GM12878 (cell line): ENCODE measurements at regions of chr12 and their contacts with region 1.

Region 1: GRCh38 chr12:9813821-9814809 is 13.2 kb upstream of the KLRF1 start:
- DNase-seq: peak; percentile 23
- ATAC-seq: peak; percentile 100
- H3K4me3 ChIP-seq: peak overlapping the region; percentile 58; the same call in 1 of the 2 replicates
- H3K27ac ChIP-seq: no peak overlapping the region
- H3K4me1 ChIP-seq: no peaks in the 10 kb centered on the region
- H3K27me3 ChIP-seq: no peaks in the 10 kb centered on the region; a peak in 2 of 4 replicates
- CTCF ChIP-seq: peak; percentile 93 to 97 (median 93)
- EP300 ChIP-seq: no peak
- POLR2A ChIP-seq: no peak
- RAD21 ChIP-seq: peak; percentile 92

Region 2: DNA sequence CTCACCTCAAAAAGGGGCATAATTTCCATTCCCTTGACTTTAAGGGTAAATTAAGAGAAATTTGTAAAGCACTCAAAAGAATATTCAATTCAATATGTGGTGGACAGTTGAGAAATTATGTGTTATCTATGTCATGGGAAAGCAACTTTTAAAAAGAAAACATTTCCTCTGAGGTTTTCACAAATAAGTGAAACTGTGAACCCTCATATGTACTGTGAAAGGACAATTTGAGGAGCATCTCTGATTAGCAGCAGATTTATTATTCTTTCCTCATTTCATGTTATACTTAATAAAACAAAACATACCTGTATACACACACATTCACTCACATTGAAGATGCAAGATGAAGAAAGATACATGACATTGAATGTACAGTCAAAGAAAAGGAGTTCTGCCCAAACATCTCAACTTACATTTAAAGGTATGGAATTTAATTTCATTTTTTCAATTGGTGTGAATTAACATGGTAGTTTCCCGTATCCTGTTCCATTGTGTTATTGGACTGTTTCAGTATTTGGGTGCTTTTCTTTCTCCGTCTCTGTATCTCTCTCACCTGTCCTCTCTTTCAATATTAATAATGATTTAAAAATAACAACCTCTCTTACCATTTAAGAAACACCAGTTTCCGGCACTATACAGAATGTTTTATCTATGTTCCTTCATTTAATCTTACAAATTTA is 13.2 kb after region 1 on chr12 and contains the start of gene KLRF1:
- CTCF ChIA-PET with region 1: interaction called, 14 read pairs
- POLR2A ChIA-PET with region 1: no interaction called
- RAD21 ChIA-PET with region 1: no interaction called
- SMC1A ChIA-PET with region 1: interaction called, 3 read pairs
- in situ Hi-C with region 1: no loop called
- intact Hi-C with region 1: no loop called
- DNase-seq: no peak
- ATAC-seq: peak; percentile 36; the same call in 1 of the 3 replicates
- H3K4me3 ChIP-seq: no peak within 1 kb of the TSS
- H3K27ac ChIP-seq: no peak within 1 kb of the TSS
- H3K4me1 ChIP-seq: no peaks in the 10 kb centered on the region
- H3K27me3 ChIP-seq: no peaks in the 10 kb centered on the region
- CTCF ChIP-seq: no peak
- EP300 ChIP-seq: no peak
- POLR2A ChIP-seq: no peak
- RAD21 ChIP-seq: no peak
- polyA plus RNA-seq, gene KLRF1: 0.18 TPM in 1 of 2 experiments, not detected in the other

Region 3: GRCh38 chr12:9851927-9852326 is 37.8 kb after region 1 on chr12:
- CTCF ChIA-PET with region 1: interaction called, 11 read pairs
- POLR2A ChIA-PET with region 1: no interaction called
- RAD21 ChIA-PET with region 1: interaction called, 3 read pairs
- SMC1A ChIA-PET with region 1: no interaction called
- in situ Hi-C with region 1: no loop called
- intact Hi-C with region 1: no loop called
- DNase-seq: no peak
- ATAC-seq: no peak
- H3K4me3 ChIP-seq: no peak overlapping the region
- H3K27ac ChIP-seq: no peak overlapping the region
- H3K4me1 ChIP-seq: no peaks in the 10 kb centered on the region
- H3K27me3 ChIP-seq: no peaks in the 10 kb centered on the region
- CTCF ChIP-seq: no peak
- EP300 ChIP-seq: no peak
- POLR2A ChIP-seq: no peak
- RAD21 ChIP-seq: no peak

Region 4: GRCh38 chr12:9925708-9926393 is 111.7 kb after region 1 on chr12:
- CTCF ChIA-PET with region 1: interaction called, 9 read pairs
- POLR2A ChIA-PET with region 1: no interaction called
- RAD21 ChIA-PET with region 1: no interaction called
- SMC1A ChIA-PET with region 1: interaction called, 8 read pairs
- in situ Hi-C with region 1: loop called (anchors 5 kb)
- intact Hi-C with region 1: loop called (anchors 1 kb)
- DNase-seq: no peak
- ATAC-seq: peak; percentile 67
- H3K4me3 ChIP-seq: no peak overlapping the region
- H3K27ac ChIP-seq: no peak overlapping the region
- H3K4me1 ChIP-seq: no peaks in the 10 kb centered on the region
- H3K27me3 ChIP-seq: no peaks in the 10 kb centered on the region
- CTCF ChIP-seq: peak; percentile 38 to 46 (median 43); a peak in 5 of 6 replicates
- EP300 ChIP-seq: no peak
- POLR2A ChIP-seq: no peak
- RAD21 ChIP-seq: peak; percentile 59

Region 5: GRCh38 chr12:10016881-10017280 is 202.8 kb after region 1 on chr12:
- CTCF ChIA-PET with region 1: interaction called, 3 read pairs
- POLR2A ChIA-PET with region 1: no interaction called
- RAD21 ChIA-PET with region 1: no interaction called
- SMC1A ChIA-PET with region 1: no interaction called
- in situ Hi-C with region 1: no loop called
- intact Hi-C with region 1: loop called (anchors 10 kb)
- DNase-seq: no peak
- ATAC-seq: no peak
- H3K4me3 ChIP-seq: no peak overlapping the region
- H3K27ac ChIP-seq: no peak overlapping the region
- H3K4me1 ChIP-seq: no peaks in the 10 kb centered on the region
- H3K27me3 ChIP-seq: peaks cover 0 to 4% of the 10 kb centered on the region in 2 experiments; a peak in 1 of 4 replicates
- CTCF ChIP-seq: no peak
- EP300 ChIP-seq: no peak
- POLR2A ChIP-seq: no peak
- RAD21 ChIP-seq: no peak

Region 6: DNA sequence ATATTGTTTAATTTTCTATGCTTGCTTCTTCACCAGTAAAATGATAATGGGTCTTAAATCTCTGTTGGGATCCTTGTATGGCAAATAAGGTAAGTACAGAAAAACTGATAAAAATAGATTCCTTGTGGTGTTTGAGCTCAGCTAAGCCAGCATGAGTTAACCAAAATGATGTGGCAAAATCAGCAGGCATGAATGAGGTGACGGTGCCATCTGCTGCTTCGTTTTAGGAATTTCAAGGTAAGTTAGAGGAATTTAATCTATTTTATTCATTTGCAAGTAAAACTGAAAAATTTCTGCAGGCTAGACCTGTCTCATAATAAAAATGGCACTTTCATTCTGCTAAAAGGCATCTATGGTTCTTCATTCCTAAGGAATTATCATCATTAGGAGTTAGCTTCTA is 325.9 kb after region 1 on chr12:
- CTCF ChIA-PET with region 1: interaction called, 10 read pairs
- POLR2A ChIA-PET with region 1: interaction called, 4 read pairs
- RAD21 ChIA-PET with region 1: interaction called, 4 read pairs
- SMC1A ChIA-PET with region 1: interaction called, 3 read pairs
- in situ Hi-C with region 1: loop called (anchors 5 kb)
- intact Hi-C with region 1: loop called (anchors 1 kb)
- DNase-seq: peak; percentile 48
- ATAC-seq: peak; percentile 47; the same call in 2 of the 3 replicates
- H3K4me3 ChIP-seq: no peak overlapping the region
- H3K27ac ChIP-seq: no peak overlapping the region
- H3K4me1 ChIP-seq: no peaks in the 10 kb centered on the region
- H3K27me3 ChIP-seq: no peaks in the 10 kb centered on the region; a peak in 1 of 4 replicates
- CTCF ChIP-seq: peak; percentile 47 to 77 (median 57); a peak in 5 of 6 replicates
- EP300 ChIP-seq: no peak
- POLR2A ChIP-seq: no peak
- RAD21 ChIP-seq: peak; percentile 97